ENCODE measurements at regions of chr5 and their contacts with region 1.

Region 1: DNA sequence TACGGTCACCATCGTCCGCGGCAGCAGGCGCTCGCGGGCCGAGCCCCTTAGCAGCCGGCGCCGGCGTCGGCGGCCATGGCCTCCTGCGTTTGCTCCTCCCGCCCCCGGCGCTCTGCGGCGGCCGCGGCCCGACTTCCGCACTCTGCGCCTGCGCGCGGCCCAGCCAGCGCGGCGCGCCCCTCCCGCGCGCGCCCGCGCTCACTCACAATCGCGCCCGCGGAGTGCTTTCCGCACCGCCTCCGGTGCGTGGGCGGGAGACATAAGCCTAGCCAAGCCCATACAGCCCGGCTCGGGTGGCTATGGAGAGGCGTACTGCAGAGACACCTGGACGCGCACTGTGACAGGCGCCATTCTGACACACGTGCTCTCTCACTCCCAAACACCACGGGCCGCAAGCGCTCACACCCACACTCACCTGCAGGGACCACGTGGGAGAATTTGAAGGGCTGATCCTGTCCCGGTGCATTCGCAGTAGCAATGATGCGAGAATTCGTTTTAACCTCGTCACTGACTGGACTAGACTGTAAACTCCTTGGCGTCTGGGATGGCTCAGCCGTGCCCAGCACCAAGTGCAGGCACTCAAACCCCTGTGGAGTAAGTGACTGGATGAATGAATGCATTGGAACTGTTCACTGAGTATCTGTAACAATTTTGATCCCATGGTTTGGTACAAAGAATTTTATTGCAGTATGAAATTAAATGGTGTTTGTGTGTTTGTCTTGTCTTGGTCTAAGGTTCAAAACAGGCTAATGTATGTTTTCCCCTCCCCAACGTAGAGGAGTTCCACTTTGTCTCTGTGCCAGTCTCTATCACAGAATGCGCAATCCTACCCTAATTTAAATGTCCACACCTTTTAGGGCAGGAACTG is at the start of gene RNF145:
- DNase-seq: peak; percentile 81 to 98 (median 92)
- ATAC-seq: peak; percentile 69
- H3K4me3 ChIP-seq: peak within 1 kb of the TSS; percentile 80
- H3K4me3 Mint-ChIP-seq: peak within 1 kb of the TSS; percentile 95
- H3K27ac ChIP-seq: peak within 1 kb of the TSS; percentile 87 to 89
- H3K27ac Mint-ChIP-seq: peak within 1 kb of the TSS; percentile 98
- H3K4me1 ChIP-seq: peaks cover 10% of the 10 kb centered on the region
- H3K4me1 Mint-ChIP-seq: peaks cover 56% of the 10 kb centered on the region
- H3K27me3 ChIP-seq: no peaks in the 10 kb centered on the region
- H3K27me3 Mint-ChIP-seq: no peaks in the 10 kb centered on the region
- CTCF ChIP-seq: no peak
- total RNA-seq, gene RNF145: 83.7 to 94.4 TPM

Region 2: GRCh38 chr5:158754018-158754514 is 455.6 kb before region 1 on chr5:
- CTCF ChIA-PET with region 1: no interaction called
- POLR2A ChIA-PET with region 1: no interaction called
- intact Hi-C with region 1: no loop called
- DNase-seq: no peak
- ATAC-seq: no peak
- H3K4me3 ChIP-seq: no peak overlapping the region
- H3K4me3 Mint-ChIP-seq: no peak overlapping the region
- H3K27ac ChIP-seq: no peak overlapping the region
- H3K27ac Mint-ChIP-seq: no peak overlapping the region
- H3K4me1 ChIP-seq: no peaks in the 10 kb centered on the region
- H3K4me1 Mint-ChIP-seq: peaks cover 5% of the 10 kb centered on the region
- H3K27me3 ChIP-seq: no peaks in the 10 kb centered on the region
- H3K27me3 Mint-ChIP-seq: peaks cover 24% of the 10 kb centered on the region
- CTCF ChIP-seq: no peak

Region 3: DNA sequence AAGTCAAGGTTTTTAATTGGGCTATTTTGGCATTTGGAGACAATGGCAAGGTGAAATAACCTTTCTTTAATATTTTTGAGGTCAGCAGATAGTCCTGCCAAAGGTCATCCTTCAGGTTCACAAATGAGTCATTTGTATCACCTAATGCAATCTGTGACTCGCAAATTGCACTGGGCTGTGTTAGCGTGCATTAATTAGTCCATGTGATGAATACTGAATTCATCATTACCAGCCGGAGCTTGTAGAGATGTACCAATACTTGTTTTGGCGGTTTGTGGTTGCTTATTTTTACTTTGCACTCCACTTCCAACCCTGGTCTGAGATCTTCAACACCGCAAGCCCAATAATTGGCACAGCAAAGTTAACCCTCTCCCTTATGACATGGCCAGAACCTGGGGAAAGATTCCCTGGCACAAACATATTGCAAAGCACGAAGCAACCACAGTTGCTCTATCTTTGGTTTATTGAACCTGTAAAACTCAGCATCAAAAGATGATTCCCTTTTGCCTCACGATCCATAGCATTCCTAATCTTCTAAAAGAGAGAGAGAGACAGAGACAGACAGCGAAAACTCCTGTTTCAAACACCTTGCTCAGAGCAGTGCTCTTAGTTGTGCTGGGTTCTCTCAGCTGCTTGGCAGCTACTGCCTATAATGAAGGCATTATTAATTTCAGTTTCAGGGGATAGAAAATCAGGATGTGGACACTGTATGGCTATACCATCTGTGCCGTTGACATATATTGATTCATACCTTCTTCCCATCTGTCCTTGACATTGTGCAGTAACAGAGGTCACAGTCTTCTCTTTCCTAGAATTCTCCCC is 288.0 kb before region 1 on chr5:
- CTCF ChIA-PET with region 1: no interaction called
- POLR2A ChIA-PET with region 1: no interaction called
- intact Hi-C with region 1: no loop called
- DNase-seq: no peak
- ATAC-seq: no peak
- H3K4me3 ChIP-seq: no peak overlapping the region
- H3K4me3 Mint-ChIP-seq: no peak overlapping the region
- H3K27ac ChIP-seq: no peak overlapping the region
- H3K27ac Mint-ChIP-seq: no peak overlapping the region
- H3K4me1 ChIP-seq: no peaks in the 10 kb centered on the region
- H3K4me1 Mint-ChIP-seq: no peaks in the 10 kb centered on the region
- H3K27me3 ChIP-seq: no peaks in the 10 kb centered on the region
- H3K27me3 Mint-ChIP-seq: no peaks in the 10 kb centered on the region
- CTCF ChIP-seq: no peak

Region 4: DNA sequence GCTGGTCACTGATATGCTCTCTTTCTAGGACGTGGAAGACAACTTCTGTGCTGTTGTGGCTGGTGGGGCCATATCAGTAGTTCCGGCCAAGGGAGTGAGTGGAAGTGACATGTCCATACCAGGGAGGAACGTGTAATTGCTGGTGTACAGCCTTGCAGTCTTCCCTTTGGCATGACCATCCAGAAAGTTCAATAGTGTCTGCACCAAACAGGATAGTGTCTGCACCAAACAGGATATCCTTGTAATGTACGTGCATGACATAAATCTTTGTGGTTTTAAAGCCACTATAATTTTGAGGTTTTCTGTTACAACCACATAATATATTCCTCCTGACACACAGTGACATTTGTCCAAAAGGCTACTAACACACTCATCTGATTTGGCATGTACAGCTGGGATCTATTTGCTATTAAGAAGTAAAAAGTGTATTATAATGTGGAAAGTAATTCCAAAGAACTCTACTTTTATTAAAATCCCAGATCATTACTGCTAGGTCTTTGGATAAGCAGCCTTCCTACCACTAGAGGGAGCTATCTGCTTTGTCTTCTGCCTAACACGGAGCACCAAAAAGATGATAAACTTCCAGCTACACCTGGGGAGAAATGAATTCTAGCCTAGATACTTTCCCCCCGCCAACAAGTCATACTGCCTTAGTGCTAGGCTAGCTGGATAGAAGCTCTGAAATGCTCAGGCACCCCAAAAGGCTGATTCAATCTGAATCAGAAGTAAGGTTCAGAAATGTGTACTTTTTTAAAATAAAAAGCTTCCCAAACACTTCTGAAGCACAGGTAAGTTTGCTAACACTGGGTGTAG is 53.0 kb before region 1 on chr5:
- CTCF ChIA-PET with region 1: interaction called, 15 read pairs
- POLR2A ChIA-PET with region 1: interaction called, 29 read pairs
- intact Hi-C with region 1: loop called (anchors 2 to 5 kb)
- DNase-seq: peak in 9 of 14 experiments; percentile 5 to 87 (median 19)
- ATAC-seq: peak; percentile 80
- H3K4me3 ChIP-seq: no peak overlapping the region
- H3K4me3 Mint-ChIP-seq: no peak overlapping the region
- H3K27ac ChIP-seq: peak overlapping the region in 1 of 2 donors; percentile 2
- H3K27ac Mint-ChIP-seq: peak overlapping the region; percentile 88
- H3K4me1 ChIP-seq: peaks cover 8% of the 10 kb centered on the region
- H3K4me1 Mint-ChIP-seq: peaks cover 23% of the 10 kb centered on the region
- H3K27me3 ChIP-seq: no peaks in the 10 kb centered on the region
- H3K27me3 Mint-ChIP-seq: no peaks in the 10 kb centered on the region
- CTCF ChIP-seq: peak; percentile 92

Region 5: DNA sequence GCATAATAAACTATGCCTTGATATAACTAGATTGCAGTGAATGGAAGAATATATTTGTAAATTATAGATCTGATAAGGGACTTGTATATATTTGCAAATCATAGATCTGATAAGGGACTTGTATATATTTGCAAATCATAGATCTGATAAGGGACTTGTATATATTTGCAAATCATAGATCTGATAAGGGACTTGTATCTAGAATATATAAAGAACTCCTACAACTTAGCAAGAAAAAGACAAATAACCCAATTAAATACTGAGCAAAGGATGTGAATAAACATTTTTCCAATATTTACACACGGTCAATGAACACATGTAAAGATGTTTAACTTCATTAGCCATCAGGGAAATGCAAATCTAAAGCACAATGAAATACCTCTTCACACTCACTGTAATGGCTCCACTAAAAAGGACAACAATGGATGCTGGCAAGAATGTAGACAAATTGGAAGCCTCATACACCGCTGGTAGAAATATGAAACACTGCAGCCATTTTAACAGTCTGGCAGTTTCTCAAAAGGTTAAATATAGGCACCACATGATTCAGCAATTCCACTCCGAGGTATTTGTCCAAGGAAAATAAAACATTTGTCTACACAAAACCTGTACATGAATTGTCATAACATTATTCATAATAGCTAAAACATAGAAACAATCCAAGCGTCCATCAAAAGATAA is 20.5 kb before region 1 on chr5:
- CTCF ChIA-PET with region 1: interaction called, 4 read pairs
- POLR2A ChIA-PET with region 1: interaction called, 14 read pairs
- intact Hi-C with region 1: no loop called
- DNase-seq: no peak
- ATAC-seq: no peak
- H3K4me3 ChIP-seq: no peak overlapping the region
- H3K4me3 Mint-ChIP-seq: no peak overlapping the region
- H3K27ac ChIP-seq: no peak overlapping the region
- H3K27ac Mint-ChIP-seq: peak overlapping the region; percentile 15
- H3K4me1 ChIP-seq: no peaks in the 10 kb centered on the region
- H3K4me1 Mint-ChIP-seq: peaks cover 69% of the 10 kb centered on the region
- H3K27me3 ChIP-seq: no peaks in the 10 kb centered on the region
- H3K27me3 Mint-ChIP-seq: no peaks in the 10 kb centered on the region
- CTCF ChIP-seq: no peak

Region 6: DNA sequence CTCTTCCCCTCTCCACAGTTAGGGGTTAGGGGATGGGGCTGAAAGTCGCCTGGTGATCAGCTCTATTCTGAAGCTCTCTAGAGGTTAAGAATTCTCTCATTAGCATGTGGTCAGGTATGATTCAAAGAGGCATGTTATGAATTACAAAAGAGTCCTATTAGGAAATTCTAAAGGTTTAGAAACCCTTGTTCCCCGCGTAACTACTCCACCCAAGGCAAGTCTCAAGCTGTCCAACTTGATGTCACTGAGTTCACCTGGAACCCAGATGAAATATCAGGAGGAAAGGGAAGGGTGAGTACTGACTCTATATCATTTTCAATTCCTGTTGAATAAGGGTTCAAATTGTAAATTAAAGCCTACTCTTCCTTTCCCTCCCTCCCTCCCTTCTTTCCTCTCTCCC is 17.8 kb after region 1 on chr5:
- CTCF ChIA-PET with region 1: no interaction called
- POLR2A ChIA-PET with region 1: no interaction called
- intact Hi-C with region 1: no loop called
- DNase-seq: no peak
- ATAC-seq: no peak
- H3K4me3 ChIP-seq: no peak overlapping the region
- H3K4me3 Mint-ChIP-seq: no peak overlapping the region
- H3K27ac ChIP-seq: no peak overlapping the region
- H3K27ac Mint-ChIP-seq: no peak overlapping the region
- H3K4me1 ChIP-seq: no peaks in the 10 kb centered on the region
- H3K4me1 Mint-ChIP-seq: no peaks in the 10 kb centered on the region
- H3K27me3 ChIP-seq: no peaks in the 10 kb centered on the region
- H3K27me3 Mint-ChIP-seq: no peaks in the 10 kb centered on the region
- CTCF ChIP-seq: no peak

Region 7: GRCh38 chr5:159240301-159240870 is 30.7 kb after region 1 on chr5:
- CTCF ChIA-PET with region 1: no interaction called
- POLR2A ChIA-PET with region 1: interaction called, 3 read pairs
- intact Hi-C with region 1: loop called in 1 of 2 experiments (anchors 5 kb)
- DNase-seq: no peak
- ATAC-seq: no peak
- H3K4me3 ChIP-seq: no peak overlapping the region
- H3K4me3 Mint-ChIP-seq: no peak overlapping the region
- H3K27ac ChIP-seq: no peak overlapping the region
- H3K27ac Mint-ChIP-seq: no peak overlapping the region
- H3K4me1 ChIP-seq: peaks cover 4% of the 10 kb centered on the region
- H3K4me1 Mint-ChIP-seq: peaks cover 24% of the 10 kb centered on the region
- H3K27me3 ChIP-seq: no peaks in the 10 kb centered on the region
- H3K27me3 Mint-ChIP-seq: no peaks in the 10 kb centered on the region
- CTCF ChIP-seq: no peak

Region 8: DNA sequence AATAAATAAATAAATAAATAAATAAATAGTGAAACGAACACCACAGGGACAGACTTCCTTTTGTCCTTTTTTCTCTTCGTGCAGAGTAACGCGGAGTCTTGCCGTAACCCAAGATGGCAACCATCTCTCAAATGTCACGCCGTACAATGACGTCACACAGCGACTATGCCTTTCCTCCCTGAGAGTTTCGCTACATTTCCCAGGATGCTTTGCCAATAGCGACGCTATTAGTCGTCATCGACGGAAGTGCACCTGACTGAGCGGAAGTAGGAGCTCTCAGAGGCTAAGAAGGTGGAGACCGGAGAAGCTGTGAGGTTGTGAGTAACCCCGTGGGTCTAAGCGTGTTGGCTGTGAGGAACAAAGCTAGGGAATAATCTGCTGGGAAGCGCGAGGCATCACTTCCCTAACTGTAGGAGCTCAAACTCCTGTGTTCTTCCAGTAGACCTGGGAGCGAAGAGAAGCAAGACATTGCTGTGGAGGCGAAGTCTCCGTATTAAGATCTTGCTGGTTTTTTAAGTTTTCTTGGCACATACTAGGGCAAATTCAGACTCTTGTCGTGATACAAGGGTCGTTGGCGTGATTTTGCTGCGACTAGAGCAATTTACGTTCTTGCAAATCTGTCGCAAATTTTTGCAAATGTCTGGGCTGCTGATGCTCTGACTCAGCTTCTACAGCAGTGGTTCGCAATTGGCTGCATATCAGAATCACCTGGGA is 799.4 kb after region 1 on chr5 and contains the start of gene TTC1:
- CTCF ChIA-PET with region 1: no interaction called
- POLR2A ChIA-PET with region 1: no interaction called
- intact Hi-C with region 1: loop called in 1 of 2 experiments (anchors 2 kb)
- DNase-seq: peak; percentile 83 to 99 (median 90)
- ATAC-seq: peak; percentile 97
- H3K4me3 ChIP-seq: peak within 1 kb of the TSS; percentile 70
- H3K4me3 Mint-ChIP-seq: peak within 1 kb of the TSS; percentile 92
- H3K27ac ChIP-seq: peak within 1 kb of the TSS; percentile 65 to 75
- H3K27ac Mint-ChIP-seq: peak within 1 kb of the TSS; percentile 92
- H3K4me1 ChIP-seq: peaks cover 18% of the 10 kb centered on the region
- H3K4me1 Mint-ChIP-seq: peaks cover 30% of the 10 kb centered on the region
- H3K27me3 ChIP-seq: no peaks in the 10 kb centered on the region
- H3K27me3 Mint-ChIP-seq: no peaks in the 10 kb centered on the region
- CTCF ChIP-seq: no peak
- total RNA-seq, gene TTC1: 15.9 to 16.3 TPM

Region 9: GRCh38 chr5:160150381-160150780 is 940.7 kb after region 1 on chr5:
- CTCF ChIA-PET with region 1: no interaction called
- POLR2A ChIA-PET with region 1: no interaction called
- intact Hi-C with region 1: no loop called
- DNase-seq: no peak
- ATAC-seq: no peak
- H3K4me3 ChIP-seq: no peak overlapping the region
- H3K4me3 Mint-ChIP-seq: no peak overlapping the region
- H3K27ac ChIP-seq: no peak overlapping the region
- H3K27ac Mint-ChIP-seq: no peak overlapping the region
- H3K4me1 ChIP-seq: peaks cover 4% of the 10 kb centered on the region
- H3K4me1 Mint-ChIP-seq: peaks cover 12% of the 10 kb centered on the region
- H3K27me3 ChIP-seq: no peaks in the 10 kb centered on the region
- H3K27me3 Mint-ChIP-seq: no peaks in the 10 kb centered on the region
- CTCF ChIP-seq: no peak